ENCODE measurements at regions of chr2 and their contacts with region 1.

Region 1: DNA sequence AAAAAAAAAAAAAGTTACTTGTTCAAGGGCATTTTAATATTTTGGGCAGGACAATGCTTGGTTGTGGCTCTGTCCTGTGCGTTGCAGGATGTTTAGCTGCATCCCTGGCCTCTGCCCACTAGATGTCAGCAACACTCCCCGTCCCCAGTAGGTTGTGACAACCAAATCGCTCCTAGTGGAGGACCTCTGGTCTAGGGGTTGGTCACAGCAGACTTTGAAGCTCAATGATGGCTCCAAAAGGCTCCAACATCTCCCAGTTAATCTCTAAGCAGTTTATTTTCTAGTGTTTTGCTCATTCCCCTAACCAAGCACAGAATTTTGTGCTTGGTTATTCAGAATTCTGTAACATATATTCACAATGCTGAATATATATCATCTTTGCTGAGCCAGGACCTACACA is 67.0 kb downstream of the CHRNA1 start:
- DNase-seq: peak; percentile 57
- H3K4me3 ChIP-seq: no peak overlapping the region
- H3K27ac ChIP-seq: no peak overlapping the region
- H3K4me1 ChIP-seq: no peaks in the 10 kb centered on the region
- H3K27me3 ChIP-seq: peaks cover 9 to 11% of the 10 kb centered on the region in 2 experiments
- CTCF ChIP-seq: peak; percentile 79 to 89
- POLR2A ChIP-seq: no peak

Region 2: GRCh38 chr2:174326161-174327020 is 370.9 kb before region 1 on chr2:
- CTCF ChIA-PET with region 1: no interaction called
- POLR2A ChIA-PET with region 1: no interaction called
- dilution Hi-C with region 1: no loop called
- intact Hi-C with region 1: no loop called
- DNase-seq: no peak
- H3K4me3 ChIP-seq: peak overlapping the region in 1 of 3 experiments; percentile 28
- H3K27ac ChIP-seq: no peak overlapping the region
- H3K4me1 ChIP-seq: peaks cover 8% of the 10 kb centered on the region
- H3K27me3 ChIP-seq: peaks cover 61 to 73% of the 10 kb centered on the region in 2 experiments
- CTCF ChIP-seq: no peak
- POLR2A ChIP-seq: no peak

Region 3: GRCh38 chr2:174465327-174465726 is 231.9 kb before region 1 on chr2:
- CTCF ChIA-PET with region 1: interaction called, 28 read pairs
- POLR2A ChIA-PET with region 1: no interaction called
- dilution Hi-C with region 1: no loop called
- intact Hi-C with region 1: no loop called
- DNase-seq: no peak
- H3K4me3 ChIP-seq: no peak overlapping the region
- H3K27ac ChIP-seq: no peak overlapping the region
- H3K4me1 ChIP-seq: no peaks in the 10 kb centered on the region
- H3K27me3 ChIP-seq: no peaks in the 10 kb centered on the region
- CTCF ChIP-seq: no peak
- POLR2A ChIP-seq: no peak

Region 4: GRCh38 chr2:174729797-174730697 is 32.8 kb after region 1 on chr2:
- CTCF ChIA-PET with region 1: interaction called, 11 read pairs
- POLR2A ChIA-PET with region 1: no interaction called
- dilution Hi-C with region 1: no loop called
- intact Hi-C with region 1: no loop called
- DNase-seq: peak; percentile 28
- H3K4me3 ChIP-seq: peak overlapping the region; percentile 7 to 39 (median 28)
- H3K27ac ChIP-seq: no peak overlapping the region
- H3K4me1 ChIP-seq: peaks cover 8% of the 10 kb centered on the region
- H3K27me3 ChIP-seq: peaks cover 15 to 17% of the 10 kb centered on the region in 2 experiments
- CTCF ChIP-seq: no peak
- POLR2A ChIP-seq: no peak

Region 5: GRCh38 chr2:174846941-174847938 is 150.0 kb after region 1 on chr2:
- CTCF ChIA-PET with region 1: no interaction called
- POLR2A ChIA-PET with region 1: no interaction called
- dilution Hi-C with region 1: no loop called
- intact Hi-C with region 1: no loop called
- DNase-seq: peak; percentile 53
- H3K4me3 ChIP-seq: no peak overlapping the region
- H3K27ac ChIP-seq: no peak overlapping the region
- H3K4me1 ChIP-seq: peaks cover 2% of the 10 kb centered on the region
- H3K27me3 ChIP-seq: no peaks in the 10 kb centered on the region
- CTCF ChIP-seq: no peak
- POLR2A ChIP-seq: no peak

Region 6: DNA sequence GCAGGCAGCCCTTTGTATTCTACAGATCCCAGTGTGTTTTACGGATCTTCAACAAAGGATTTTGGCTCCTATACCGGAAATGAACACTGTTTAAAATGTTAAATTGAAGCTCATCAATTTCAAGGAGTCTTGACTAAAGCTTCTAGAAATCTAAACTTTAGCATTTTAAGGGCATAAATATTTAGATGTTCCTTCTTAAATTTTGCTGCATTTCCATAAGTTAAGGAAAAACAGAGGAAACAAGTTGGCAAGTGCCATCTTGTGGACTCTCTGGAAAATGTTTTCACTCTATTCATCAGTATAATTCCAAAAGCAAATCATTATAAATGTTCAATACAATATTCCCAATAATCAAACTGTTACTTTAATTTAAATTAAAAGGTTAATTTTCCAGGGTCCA is 288.4 kb after region 1 on chr2:
- CTCF ChIA-PET with region 1: interaction called, 16 read pairs
- POLR2A ChIA-PET with region 1: no interaction called
- dilution Hi-C with region 1: no loop called
- intact Hi-C with region 1: loop called (anchors 1 kb)
- DNase-seq: peak; percentile 55
- H3K4me3 ChIP-seq: no peak overlapping the region
- H3K27ac ChIP-seq: no peak overlapping the region
- H3K4me1 ChIP-seq: no peaks in the 10 kb centered on the region
- H3K27me3 ChIP-seq: no peaks in the 10 kb centered on the region
- CTCF ChIP-seq: peak; percentile 21 to 36
- POLR2A ChIP-seq: no peak

Region 7: GRCh38 chr2:175251425-175252041 is 554.3 kb after region 1 on chr2:
- CTCF ChIA-PET with region 1: interaction called, 15 read pairs
- POLR2A ChIA-PET with region 1: no interaction called
- dilution Hi-C with region 1: no loop called
- intact Hi-C with region 1: no loop called
- DNase-seq: peak; percentile 48
- H3K4me3 ChIP-seq: no peak overlapping the region
- H3K27ac ChIP-seq: no peak overlapping the region
- H3K4me1 ChIP-seq: no peaks in the 10 kb centered on the region
- H3K27me3 ChIP-seq: peaks cover 12 to 16% of the 10 kb centered on the region in 2 experiments
- CTCF ChIP-seq: peak; percentile 46 to 57
- POLR2A ChIP-seq: no peak

Region 8: DNA sequence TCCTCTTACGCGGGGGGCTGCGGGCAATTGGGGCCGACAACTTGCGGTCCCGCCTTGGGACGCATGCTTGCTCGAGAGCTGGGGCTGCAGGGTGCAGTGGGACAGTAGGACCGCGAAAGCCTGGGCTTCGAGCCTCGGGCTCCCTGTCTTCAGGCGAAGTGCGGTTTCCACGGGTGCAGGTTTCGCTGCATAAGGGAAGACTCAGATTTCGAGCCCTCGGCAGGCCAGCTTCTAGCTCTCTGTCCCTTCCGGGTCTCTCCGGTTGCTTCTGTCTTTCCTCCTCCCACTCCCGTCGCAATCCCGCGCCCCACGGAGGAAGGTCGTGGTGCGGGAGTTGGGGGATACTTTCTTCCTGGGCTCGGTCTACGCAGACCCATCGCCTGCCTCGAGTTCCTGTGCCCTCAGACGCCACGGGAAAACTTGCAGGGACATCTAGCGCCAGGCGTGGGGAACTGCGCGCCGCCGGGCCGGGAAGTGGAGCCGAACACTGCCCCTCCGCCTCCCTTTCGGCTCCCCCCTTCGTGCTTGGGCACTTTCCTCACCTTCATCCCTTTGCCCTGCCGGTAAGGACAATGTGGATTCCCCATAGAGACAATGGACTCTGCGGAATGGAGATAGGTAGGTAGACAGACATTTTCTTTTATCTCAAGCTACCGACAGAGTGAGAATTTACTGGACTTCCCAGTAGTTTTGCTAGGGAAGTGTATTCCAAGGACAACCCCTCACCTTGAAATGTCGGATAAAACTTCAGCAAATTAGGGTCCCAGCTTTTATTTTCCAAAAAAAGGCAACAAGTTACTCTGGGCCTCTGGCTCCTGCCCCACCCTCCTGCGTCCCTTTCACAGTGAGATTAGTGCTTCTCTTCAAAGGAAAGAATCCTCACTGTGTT is 1391.0 kb after region 1 on chr2:
- CTCF ChIA-PET with region 1: interaction called, 11 read pairs
- POLR2A ChIA-PET with region 1: no interaction called
- dilution Hi-C with region 1: no loop called
- intact Hi-C with region 1: no loop called
- DNase-seq: peak; percentile 51
- H3K4me3 ChIP-seq: no peak overlapping the region
- H3K27ac ChIP-seq: no peak overlapping the region
- H3K4me1 ChIP-seq: no peaks in the 10 kb centered on the region
- H3K27me3 ChIP-seq: peaks cover 87 to 98% of the 10 kb centered on the region in 2 experiments
- CTCF ChIP-seq: peak; percentile 68 to 87
- POLR2A ChIP-seq: no peak